GM12878 (cell line): ENCODE measurements at regions of chr7 and their contacts with region 1.

Region 1: DNA sequence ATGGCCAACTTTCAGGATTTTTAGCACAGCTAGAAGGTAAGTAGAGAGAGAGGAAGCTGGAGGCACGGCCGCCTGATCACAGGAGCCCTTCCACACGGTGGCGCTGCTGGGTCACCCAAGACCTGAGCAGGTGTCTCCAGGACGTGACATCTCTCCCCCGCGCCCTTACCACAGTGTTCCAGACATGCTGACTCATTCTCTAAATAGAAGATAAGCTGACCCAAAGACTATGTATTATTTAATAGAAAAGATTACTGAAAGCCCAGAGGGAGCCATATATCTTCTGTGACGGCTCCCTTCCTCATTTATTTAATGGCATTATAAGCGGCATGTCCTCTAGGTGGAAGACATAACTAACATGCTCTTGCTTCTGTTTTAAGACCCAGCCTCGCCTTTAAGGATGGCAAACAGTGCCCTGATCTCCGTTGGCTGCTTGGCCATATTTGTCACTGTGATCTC is 26.0 kb upstream of the MALSU1 start:
- DNase-seq: peak; percentile 78
- ATAC-seq: peak; percentile 98
- H3K4me3 ChIP-seq: peak overlapping the region; percentile 56
- H3K27ac ChIP-seq: peak overlapping the region; percentile 73
- H3K4me1 ChIP-seq: peaks cover 3% of the 10 kb centered on the region; the same call in 1 of the 2 replicates
- H3K27me3 ChIP-seq: no peaks in the 10 kb centered on the region
- CTCF ChIP-seq: peak; percentile 90 to 94 (median 92)
- EP300 ChIP-seq: no peak
- POLR2A ChIP-seq: peak; percentile 39; the same call in 1 of the 2 replicates
- RAD21 ChIP-seq: peak; percentile 67

Region 2: DNA sequence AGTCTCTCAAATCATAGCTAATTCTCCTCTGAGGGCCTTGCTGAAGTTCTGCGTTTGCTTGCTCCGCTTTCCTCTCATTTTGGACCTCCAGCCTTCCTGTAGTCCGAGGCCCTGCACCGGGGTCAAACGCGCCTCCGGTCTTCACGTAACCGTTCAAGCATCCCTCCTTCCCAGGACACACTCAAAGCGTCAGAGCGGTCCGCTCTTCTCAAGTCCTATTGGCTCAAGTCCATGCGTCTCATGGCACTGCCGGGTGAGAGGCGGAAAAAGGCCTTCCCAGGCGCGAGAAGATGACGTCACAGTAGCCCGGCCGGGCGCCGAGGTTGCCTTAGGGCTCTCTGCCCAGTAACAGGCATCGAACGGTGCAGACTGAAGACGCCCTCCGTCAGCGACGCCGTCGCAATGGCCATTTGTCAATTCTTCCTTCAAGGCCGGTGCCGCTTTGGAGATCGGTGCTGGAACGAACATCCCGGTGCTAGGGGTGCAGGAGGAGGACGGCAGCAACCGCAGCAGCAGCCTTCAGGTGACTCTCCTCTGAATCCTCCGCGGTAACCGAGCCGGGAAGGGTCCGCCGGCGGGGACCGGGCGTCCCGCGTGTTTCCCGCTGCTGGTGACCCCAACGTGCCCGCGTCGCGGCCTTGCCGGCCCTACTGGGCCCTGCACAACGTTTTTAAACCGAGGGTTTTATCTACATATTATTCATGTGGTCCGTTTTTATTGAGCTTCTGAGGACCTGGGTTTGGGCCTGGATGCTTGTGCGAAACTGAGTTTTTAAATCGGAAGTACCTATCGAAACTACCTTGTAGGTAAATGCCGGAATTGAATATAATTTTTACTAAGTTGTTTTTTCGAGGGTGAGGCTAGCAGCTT is 91.3 kb before region 1 on chr7 and contains the start of gene NUP42:
- CTCF ChIA-PET with region 1: interaction called, 77 read pairs
- POLR2A ChIA-PET with region 1: no interaction called
- RAD21 ChIA-PET with region 1: interaction called, 53 read pairs
- SMC1A ChIA-PET with region 1: interaction called, 32 read pairs
- in situ Hi-C with region 1: no loop called
- intact Hi-C with region 1: loop called (anchors 1 kb)
- DNase-seq: peak; percentile 97
- ATAC-seq: peak; percentile 95
- H3K4me3 ChIP-seq: peak within 1 kb of the TSS; percentile 74
- H3K27ac ChIP-seq: peak within 1 kb of the TSS; percentile 90
- H3K4me1 ChIP-seq: 0 out of 2 replicates have a peak, but pooled peaks cover 3% of the 10 kb centered on the region
- H3K27me3 ChIP-seq: no peaks in the 10 kb centered on the region
- CTCF ChIP-seq: no peak
- EP300 ChIP-seq: peak; percentile 42 to 62; a peak in 3 of 4 replicates
- POLR2A ChIP-seq: peak; percentile 99
- RAD21 ChIP-seq: no peak
- polyA plus RNA-seq, gene NUP42: 58.6 to 92.1 TPM

Region 3: GRCh38 chr7:23298885-23299769 is 26.0 kb after region 1 on chr7 and contains the start of gene MALSU1:
- CTCF ChIA-PET with region 1: interaction called, 15 read pairs
- POLR2A ChIA-PET with region 1: interaction called, 4 read pairs
- RAD21 ChIA-PET with region 1: interaction called, 6 read pairs
- SMC1A ChIA-PET with region 1: interaction called, 6 read pairs
- in situ Hi-C with region 1: no loop called
- intact Hi-C with region 1: no loop called
- DNase-seq: peak; percentile 89
- ATAC-seq: peak; percentile 98
- H3K4me3 ChIP-seq: peak within 1 kb of the TSS; percentile 87
- H3K27ac ChIP-seq: peak within 1 kb of the TSS; percentile 60
- H3K4me1 ChIP-seq: peaks cover 2% of the 10 kb centered on the region; the same call in 1 of the 2 replicates
- H3K27me3 ChIP-seq: no peaks in the 10 kb centered on the region
- CTCF ChIP-seq: no peak
- EP300 ChIP-seq: no peak
- POLR2A ChIP-seq: peak; percentile 97
- RAD21 ChIP-seq: no peak
- polyA plus RNA-seq, gene MALSU1: 8.5 to 35.0 TPM

Region 4: GRCh38 chr7:23462846-23463245 is 189.7 kb after region 1 on chr7:
- CTCF ChIA-PET with region 1: interaction called, 14 read pairs
- POLR2A ChIA-PET with region 1: interaction called, 5 read pairs
- RAD21 ChIA-PET with region 1: interaction called, 11 read pairs
- SMC1A ChIA-PET with region 1: interaction called, 21 read pairs
- in situ Hi-C with region 1: no loop called
- intact Hi-C with region 1: no loop called
- DNase-seq: no peak
- ATAC-seq: peak; percentile 20
- H3K4me3 ChIP-seq: peak overlapping the region; percentile 39
- H3K27ac ChIP-seq: peak overlapping the region; percentile 57
- H3K4me1 ChIP-seq: peaks cover 10% of the 10 kb centered on the region
- H3K27me3 ChIP-seq: no peaks in the 10 kb centered on the region
- CTCF ChIP-seq: peak in 1 of 3 experiments; percentile 62; a peak in 3 of 6 replicates
- EP300 ChIP-seq: no peak
- POLR2A ChIP-seq: no peak
- RAD21 ChIP-seq: peak; percentile 66

Region 5: GRCh38 chr7:23546897-23547572 is 273.9 kb after region 1 on chr7:
- CTCF ChIA-PET with region 1: interaction called, 69 read pairs
- POLR2A ChIA-PET with region 1: no interaction called
- RAD21 ChIA-PET with region 1: interaction called, 37 read pairs
- SMC1A ChIA-PET with region 1: interaction called, 18 read pairs
- in situ Hi-C with region 1: no loop called
- intact Hi-C with region 1: loop called (anchors 1 kb)
- DNase-seq: peak; percentile 74
- ATAC-seq: peak; percentile 79
- H3K4me3 ChIP-seq: no peak overlapping the region
- H3K27ac ChIP-seq: peak overlapping the region; percentile 18; the same call in 1 of the 2 replicates
- H3K4me1 ChIP-seq: peaks cover 13% of the 10 kb centered on the region
- H3K27me3 ChIP-seq: no peaks in the 10 kb centered on the region
- CTCF ChIP-seq: peak; percentile 83 to 95 (median 93); a peak in 5 of 6 replicates
- EP300 ChIP-seq: no peak
- POLR2A ChIP-seq: no peak
- RAD21 ChIP-seq: peak; percentile 89

Region 6: GRCh38 chr7:24172856-24173255 is 899.7 kb after region 1 on chr7:
- CTCF ChIA-PET with region 1: no interaction called
- POLR2A ChIA-PET with region 1: no interaction called
- RAD21 ChIA-PET with region 1: no interaction called
- SMC1A ChIA-PET with region 1: no interaction called
- in situ Hi-C with region 1: no loop called
- intact Hi-C with region 1: no loop called
- DNase-seq: no peak
- ATAC-seq: no peak
- H3K4me3 ChIP-seq: no peak overlapping the region
- H3K27ac ChIP-seq: no peak overlapping the region
- H3K4me1 ChIP-seq: no peaks in the 10 kb centered on the region
- H3K27me3 ChIP-seq: no peaks in the 10 kb centered on the region; a peak in 1 of 4 replicates
- CTCF ChIP-seq: no peak
- EP300 ChIP-seq: no peak
- POLR2A ChIP-seq: no peak
- RAD21 ChIP-seq: no peak

Region 7: DNA sequence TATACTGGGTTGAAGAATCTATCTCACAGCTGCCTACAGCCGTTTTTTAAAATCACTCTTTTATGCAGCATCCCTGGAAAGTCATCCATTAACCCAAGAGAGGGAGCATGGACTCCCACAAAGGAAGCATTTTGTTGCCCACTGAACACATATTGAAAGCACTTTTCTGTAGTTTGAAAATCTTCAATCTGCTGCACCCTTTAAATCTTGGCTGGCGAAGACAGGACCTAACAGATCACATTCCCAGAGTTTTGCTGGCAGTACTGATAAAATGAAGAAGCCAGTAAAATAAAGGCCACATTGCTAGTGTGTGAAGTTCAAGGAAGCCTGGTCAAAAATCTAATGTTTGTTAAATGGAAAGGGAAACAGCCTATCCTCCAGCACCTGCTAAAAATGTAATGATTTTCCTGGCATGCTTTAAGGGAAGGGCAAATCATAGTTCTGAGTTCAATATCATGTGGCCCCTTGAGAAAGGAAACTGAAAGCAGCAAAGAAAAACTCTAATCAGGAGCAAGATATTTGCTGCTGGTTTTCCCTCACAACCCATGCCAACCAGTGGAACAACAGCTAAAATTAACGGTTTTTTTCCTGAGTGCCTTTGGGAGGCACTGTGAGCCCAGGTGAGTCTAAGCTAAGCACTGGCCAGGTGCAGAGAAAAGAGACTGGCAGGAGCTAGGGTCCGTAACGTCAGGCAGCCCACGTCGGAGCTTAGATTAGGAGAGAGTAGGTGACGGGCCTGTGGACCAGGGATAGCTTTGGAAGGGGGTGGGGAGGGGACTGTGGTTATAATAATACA is 1202.2 kb after region 1 on chr7:
- CTCF ChIA-PET with region 1: no interaction called
- POLR2A ChIA-PET with region 1: no interaction called
- RAD21 ChIA-PET with region 1: no interaction called
- SMC1A ChIA-PET with region 1: no interaction called
- in situ Hi-C with region 1: no loop called
- intact Hi-C with region 1: no loop called
- DNase-seq: no peak
- ATAC-seq: no peak
- H3K4me3 ChIP-seq: no peak overlapping the region
- H3K27ac ChIP-seq: no peak overlapping the region
- H3K4me1 ChIP-seq: no peaks in the 10 kb centered on the region
- H3K27me3 ChIP-seq: no peaks in the 10 kb centered on the region; a peak in 2 of 4 replicates
- CTCF ChIP-seq: no peak
- EP300 ChIP-seq: no peak
- POLR2A ChIP-seq: no peak
- RAD21 ChIP-seq: no peak